Naive thymus-derived CD4-positive, alpha-beta T cell (primary cell): ENCODE measurements at regions of chr22 and their contacts with region 1.

Region 1: DNA sequence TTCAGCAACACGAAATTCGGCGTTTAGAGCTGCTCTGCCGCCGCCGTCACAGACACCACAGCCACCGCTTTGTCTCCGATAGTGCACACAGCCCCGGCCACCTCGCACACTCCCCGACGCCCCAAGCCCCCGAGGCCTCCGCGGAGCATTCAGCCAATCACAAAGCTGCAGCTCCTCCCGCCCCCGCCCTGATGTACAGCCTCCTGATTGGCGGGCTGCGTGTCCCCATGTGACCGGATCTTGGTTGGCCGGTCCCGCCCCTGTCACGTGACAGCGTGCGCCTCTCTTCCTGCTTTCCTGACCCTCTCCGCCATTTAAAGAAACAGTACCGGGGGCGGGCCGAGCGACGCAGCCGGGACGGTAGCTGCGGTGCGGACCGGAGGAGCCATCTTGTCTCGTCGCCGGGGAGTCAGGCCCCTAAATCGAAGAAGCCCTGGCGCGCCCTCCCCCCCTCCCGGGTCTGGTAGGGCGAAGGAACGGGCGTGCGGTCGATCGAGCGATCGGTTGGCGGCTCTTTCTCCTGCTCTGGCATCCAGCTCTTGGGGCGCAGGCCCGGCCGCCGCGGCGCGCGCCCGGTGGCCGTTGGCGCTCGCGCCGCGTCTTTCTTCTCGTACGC is at the start of gene TUG1:
- DNase-seq: peak; percentile 88 to 98 (median 97)
- ATAC-seq: peak; percentile 96
- H3K4me3 ChIP-seq: peak within 1 kb of the TSS; percentile 59
- H3K4me3 Mint-ChIP-seq: peak within 1 kb of the TSS; percentile 90 to 96 (median 93)
- H3K27ac ChIP-seq: peak within 1 kb of the TSS; percentile 94
- H3K27ac Mint-ChIP-seq: peak within 1 kb of the TSS; percentile 90 to 98 (median 97)
- H3K4me1 ChIP-seq: peaks cover 22 to 23% of the 10 kb centered on the region in 2 donors
- H3K4me1 Mint-ChIP-seq: peaks cover 12 to 67% (median 58%) of the 10 kb centered on the region in 7 donors
- H3K27me3 ChIP-seq: no peaks in the 10 kb centered on the region
- H3K27me3 Mint-ChIP-seq: peaks cover 0 to 4% (median 0%) of the 10 kb centered on the region in 5 donors
- total RNA-seq, gene TUG1: 82.7 to 159 (median 113) TPM

Region 2: GRCh38 chr22:30634471-30635233 is 334.4 kb before region 1 on chr22:
- CTCF ChIA-PET with region 1: interaction called, 3 read pairs
- POLR2A ChIA-PET with region 1: interaction called, 3 read pairs
- intact Hi-C with region 1: loop called in 1 of 2 experiments (anchors 1 kb)
- DNase-seq: peak; percentile 79 to 91 (median 88)
- ATAC-seq: peak; percentile 76
- H3K4me3 ChIP-seq: peak overlapping the region; percentile 77
- H3K4me3 Mint-ChIP-seq: peak overlapping the region; percentile 77 to 92 (median 83)
- H3K27ac ChIP-seq: peak overlapping the region; percentile 70
- H3K27ac Mint-ChIP-seq: peak overlapping the region; percentile 75 to 93 (median 85)
- H3K4me1 ChIP-seq: peaks cover 18 to 27% of the 10 kb centered on the region in 2 donors
- H3K4me1 Mint-ChIP-seq: peaks cover 13 to 25% (median 23%) of the 10 kb centered on the region in 7 donors
- H3K27me3 ChIP-seq: no peaks in the 10 kb centered on the region
- H3K27me3 Mint-ChIP-seq: no peaks in the 10 kb centered on the region

Region 3: GRCh38 chr22:30790366-30790765 is 178.7 kb before region 1 on chr22:
- CTCF ChIA-PET with region 1: no interaction called
- POLR2A ChIA-PET with region 1: no interaction called
- intact Hi-C with region 1: no loop called
- DNase-seq: no peak
- ATAC-seq: no peak
- H3K4me3 ChIP-seq: no peak overlapping the region
- H3K4me3 Mint-ChIP-seq: no peak overlapping the region
- H3K27ac ChIP-seq: no peak overlapping the region
- H3K27ac Mint-ChIP-seq: no peak overlapping the region
- H3K4me1 ChIP-seq: no peaks in the 10 kb centered on the region
- H3K4me1 Mint-ChIP-seq: no peaks in the 10 kb centered on the region
- H3K27me3 ChIP-seq: no peaks in the 10 kb centered on the region
- H3K27me3 Mint-ChIP-seq: peaks cover 0 to 2% (median 0%) of the 10 kb centered on the region in 5 donors

Region 4: GRCh38 chr22:30843245-30843644 is 125.8 kb before region 1 on chr22:
- CTCF ChIA-PET with region 1: no interaction called
- POLR2A ChIA-PET with region 1: no interaction called
- intact Hi-C with region 1: no loop called
- DNase-seq: no peak
- ATAC-seq: no peak
- H3K4me3 ChIP-seq: no peak overlapping the region
- H3K4me3 Mint-ChIP-seq: no peak overlapping the region
- H3K27ac ChIP-seq: no peak overlapping the region
- H3K27ac Mint-ChIP-seq: no peak overlapping the region
- H3K4me1 ChIP-seq: no peaks in the 10 kb centered on the region
- H3K4me1 Mint-ChIP-seq: no peaks in the 10 kb centered on the region
- H3K27me3 ChIP-seq: no peaks in the 10 kb centered on the region
- H3K27me3 Mint-ChIP-seq: peaks cover 0 to 5% (median 3%) of the 10 kb centered on the region in 5 donors

Region 5: DNA sequence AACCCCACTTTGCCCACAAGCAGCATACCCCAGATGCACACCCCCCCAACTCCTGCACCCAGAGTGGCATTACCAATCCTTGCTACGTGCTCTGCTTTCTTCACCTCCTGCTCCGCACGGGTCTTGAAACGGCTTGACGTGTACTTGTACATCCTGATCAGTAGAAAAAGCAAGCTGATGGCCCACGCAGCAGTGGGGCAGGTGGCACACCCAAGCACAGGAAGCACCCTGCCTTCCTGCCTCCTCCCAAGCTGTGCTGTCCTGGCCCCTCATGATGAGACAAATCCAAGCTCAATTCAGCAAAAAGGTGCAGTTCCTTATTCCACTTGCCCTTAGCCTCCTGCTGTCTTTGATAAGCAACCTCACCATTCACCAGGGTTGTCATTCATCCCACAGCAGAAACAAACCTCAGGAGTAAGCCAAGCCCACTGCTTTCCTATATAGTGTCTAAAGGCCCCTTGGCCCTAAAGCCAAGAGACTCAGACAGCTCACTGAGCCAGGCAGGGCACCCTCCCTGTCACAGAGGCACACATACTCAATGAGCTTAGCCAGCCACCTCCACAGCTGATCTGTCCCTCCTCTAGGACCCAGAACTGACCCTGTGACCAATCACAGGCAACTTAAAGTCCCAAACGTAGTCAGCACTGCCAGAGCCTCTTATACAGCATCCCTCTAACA is 28.2 kb before region 1 on chr22:
- CTCF ChIA-PET with region 1: interaction called, 18 read pairs
- POLR2A ChIA-PET with region 1: interaction called, 117 read pairs
- intact Hi-C with region 1: loop called (anchors 1 to 2 kb)
- DNase-seq: peak in 7 of 9 donors; percentile 52 to 72 (median 64)
- ATAC-seq: peak; percentile 74
- H3K4me3 ChIP-seq: peak overlapping the region; percentile 67
- H3K4me3 Mint-ChIP-seq: peak overlapping the region; percentile 81 to 95 (median 88)
- H3K27ac ChIP-seq: peak overlapping the region; percentile 78
- H3K27ac Mint-ChIP-seq: peak overlapping the region; percentile 85 to 97 (median 94)
- H3K4me1 ChIP-seq: peaks cover 43 to 93% of the 10 kb centered on the region in 2 donors
- H3K4me1 Mint-ChIP-seq: peaks cover 53 to 97% (median 93%) of the 10 kb centered on the region in 7 donors
- H3K27me3 ChIP-seq: no peaks in the 10 kb centered on the region
- H3K27me3 Mint-ChIP-seq: no peaks in the 10 kb centered on the region

Region 6: DNA sequence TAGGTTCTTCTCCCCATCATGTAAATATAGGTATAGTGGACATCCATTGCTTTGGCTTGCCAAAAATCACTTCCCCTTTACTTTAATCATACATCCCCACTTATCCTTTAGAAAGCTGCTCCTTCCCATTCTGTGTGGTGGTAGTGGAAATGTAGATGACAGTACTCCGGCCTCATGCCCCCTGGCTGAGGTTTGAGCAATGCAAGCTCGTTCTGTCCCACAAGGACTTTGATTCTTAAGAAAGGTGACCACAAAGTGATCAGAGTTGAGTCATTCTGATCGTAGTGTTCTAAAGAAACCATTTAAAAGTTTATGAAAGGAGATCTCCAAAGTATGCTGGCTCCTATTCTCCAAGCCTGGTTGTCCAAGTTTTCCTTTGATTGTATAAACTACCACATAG is 10.9 kb after region 1 on chr22:
- CTCF ChIA-PET with region 1: interaction called, 6 read pairs
- POLR2A ChIA-PET with region 1: interaction called, 22 read pairs
- intact Hi-C with region 1: no loop called
- DNase-seq: no peak
- ATAC-seq: no peak
- H3K4me3 ChIP-seq: no peak overlapping the region
- H3K4me3 Mint-ChIP-seq: no peak overlapping the region
- H3K27ac ChIP-seq: no peak overlapping the region
- H3K27ac Mint-ChIP-seq: no peak overlapping the region
- H3K4me1 ChIP-seq: no peaks in the 10 kb centered on the region
- H3K4me1 Mint-ChIP-seq: peaks cover 0 to 10% (median 3%) of the 10 kb centered on the region in 7 donors
- H3K27me3 ChIP-seq: no peaks in the 10 kb centered on the region
- H3K27me3 Mint-ChIP-seq: peaks cover 0 to 4% (median 0%) of the 10 kb centered on the region in 5 donors

Region 7: GRCh38 chr22:31211862-31212730 is 243.1 kb after region 1 on chr22 and contains the start of gene LIMK2:
- CTCF ChIA-PET with region 1: no interaction called
- POLR2A ChIA-PET with region 1: interaction called, 3 read pairs
- intact Hi-C with region 1: loop called (anchors 1 kb)
- DNase-seq: peak; percentile 90 to 99 (median 95)
- ATAC-seq: peak; percentile 100
- H3K4me3 ChIP-seq: peak within 1 kb of the TSS; percentile 83
- H3K4me3 Mint-ChIP-seq: peak within 1 kb of the TSS; percentile 86 to 91 (median 88)
- H3K27ac ChIP-seq: peak within 1 kb of the TSS; percentile 82
- H3K27ac Mint-ChIP-seq: peak within 1 kb of the TSS; percentile 82 to 96 (median 89)
- H3K4me1 ChIP-seq: peaks cover 23 to 31% of the 10 kb centered on the region in 2 donors
- H3K4me1 Mint-ChIP-seq: peaks cover 38 to 72% (median 51%) of the 10 kb centered on the region in 7 donors
- H3K27me3 ChIP-seq: no peaks in the 10 kb centered on the region
- H3K27me3 Mint-ChIP-seq: no peaks in the 10 kb centered on the region
- total RNA-seq, gene LIMK2: 18.3 to 49.9 (median 28.8) TPM

Region 8: GRCh38 chr22:31749636-31750364 is 780.8 kb after region 1 on chr22 and contains the start of gene PRR14L:
- CTCF ChIA-PET with region 1: no interaction called
- POLR2A ChIA-PET with region 1: no interaction called
- intact Hi-C with region 1: loop called in 1 of 2 experiments (anchors 5 kb)
- DNase-seq: peak; percentile 94 to 100 (median 98)
- ATAC-seq: peak; percentile 86
- H3K4me3 ChIP-seq: peak within 1 kb of the TSS; percentile 92
- H3K4me3 Mint-ChIP-seq: peak within 1 kb of the TSS; percentile 87 to 97 (median 94)
- H3K27ac ChIP-seq: peak within 1 kb of the TSS; percentile 83
- H3K27ac Mint-ChIP-seq: peak within 1 kb of the TSS; percentile 82 to 98 (median 96)
- H3K4me1 ChIP-seq: peaks cover 31 to 37% of the 10 kb centered on the region in 2 donors
- H3K4me1 Mint-ChIP-seq: peaks cover 36 to 65% (median 59%) of the 10 kb centered on the region in 7 donors
- H3K27me3 ChIP-seq: no peaks in the 10 kb centered on the region
- H3K27me3 Mint-ChIP-seq: peaks cover 0 to 2% (median 0%) of the 10 kb centered on the region in 5 donors
- total RNA-seq, gene PRR14L: 43.1 to 82.6 (median 66.9) TPM